Activated B cell treated with CpG ODN at 0.5 μM for 24 hours (primary cell): ENCODE measurements at regions of chr3 and their contacts with region 1.

Region 1: DNA sequence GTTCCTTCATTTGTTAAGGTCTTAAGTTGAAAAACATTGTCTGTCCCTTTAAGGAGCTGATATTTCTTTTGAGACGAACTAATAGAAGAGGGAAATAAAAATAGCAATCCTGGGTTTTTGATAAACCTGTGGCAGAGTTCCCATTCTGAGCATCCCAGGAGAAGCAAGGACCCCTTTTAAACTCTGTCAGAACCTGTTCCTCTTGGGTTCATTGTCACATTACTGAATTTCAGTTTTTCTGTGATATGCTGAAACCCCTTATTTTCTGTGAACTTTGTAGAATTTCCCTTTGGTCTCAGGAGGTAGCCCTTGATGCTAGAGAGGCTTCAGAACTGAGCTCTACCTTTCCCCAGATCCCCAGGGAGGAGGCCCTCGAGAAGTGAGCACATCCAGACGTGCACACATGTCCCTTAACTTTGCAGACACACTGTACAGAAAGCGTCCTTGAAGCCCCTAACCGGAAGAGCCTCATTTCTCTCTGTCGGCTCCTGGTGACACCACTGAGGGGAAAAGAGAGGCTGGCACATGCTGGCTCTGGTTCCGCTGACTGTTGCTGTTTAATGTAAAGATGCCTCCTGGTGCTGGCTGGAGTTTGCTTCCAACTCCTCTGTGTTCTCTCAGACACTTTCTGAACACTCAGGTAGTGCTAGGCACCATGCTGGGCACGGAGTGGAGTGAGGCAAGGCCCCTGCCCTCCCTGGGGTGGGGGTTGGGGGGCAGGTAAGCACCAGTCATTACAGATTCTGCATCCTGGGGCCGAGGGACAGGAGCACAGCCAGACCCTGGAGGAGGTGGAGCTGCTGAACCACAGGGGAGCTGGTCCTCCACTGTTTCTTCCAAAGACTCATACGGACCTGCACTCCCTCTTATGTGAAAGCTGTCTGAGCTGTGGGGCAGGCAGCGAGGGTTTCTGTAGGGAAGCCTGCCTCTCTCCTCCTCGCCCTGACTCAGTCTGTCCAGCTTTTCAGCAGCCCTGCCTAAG is 77.5 kb downstream of the CHDH start:
- DNase-seq: no peak
- ATAC-seq: peak; percentile 81
- H3K4me3 Mint-ChIP-seq: no peak overlapping the region
- H3K27ac Mint-ChIP-seq: peak overlapping the region; percentile 31
- H3K4me1 Mint-ChIP-seq: peaks cover 21% of the 10 kb centered on the region
- H3K27me3 Mint-ChIP-seq: no peaks in the 10 kb centered on the region
- CTCF ChIP-seq: no peak

Region 2: DNA sequence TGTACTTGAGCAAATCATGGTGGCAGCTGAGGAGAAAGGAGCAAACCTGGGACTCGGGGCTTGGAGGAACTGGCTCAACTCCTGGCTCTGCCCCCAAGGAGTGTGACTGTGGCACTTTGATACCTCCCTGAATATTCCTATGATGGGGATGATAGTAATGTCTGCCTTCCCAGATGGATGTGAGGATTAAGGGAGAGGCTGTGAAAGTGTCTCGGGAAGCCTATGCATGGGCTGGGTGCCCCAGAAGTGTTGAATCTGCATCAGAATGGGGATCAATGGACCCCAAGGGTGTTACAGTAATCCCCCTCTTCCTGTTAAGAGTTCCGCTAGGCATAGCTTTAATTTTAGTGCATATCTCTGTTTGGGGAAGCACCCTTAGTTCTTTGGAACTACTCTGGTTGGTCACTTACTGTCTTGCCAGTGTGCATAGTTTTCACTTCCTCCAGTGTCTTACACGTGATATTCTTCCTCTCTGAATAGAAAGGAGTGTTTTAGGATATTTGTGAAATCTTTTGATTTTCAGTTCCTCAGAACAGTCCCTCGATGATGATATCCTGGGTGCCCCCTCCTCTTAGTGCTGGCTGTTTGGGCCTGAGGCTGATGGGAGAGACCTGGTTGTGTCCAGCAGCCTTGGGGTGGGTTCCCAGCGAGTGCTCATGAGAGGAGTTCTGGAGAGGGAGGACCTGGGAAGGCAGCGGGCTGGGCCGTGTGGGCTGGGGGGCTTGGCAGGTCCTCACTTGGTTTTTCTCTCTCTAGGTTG is 20.1 kb before region 1 on chr3:
- CTCF ChIA-PET with region 1: no interaction called
- POLR2A ChIA-PET with region 1: interaction called, 5 read pairs
- intact Hi-C with region 1: loop called (anchors 2 kb)
- DNase-seq: peak; percentile 27
- ATAC-seq: peak; percentile 81
- H3K4me3 Mint-ChIP-seq: peak overlapping the region; percentile 72
- H3K27ac Mint-ChIP-seq: peak overlapping the region; percentile 94
- H3K4me1 Mint-ChIP-seq: peaks cover 68% of the 10 kb centered on the region
- H3K27me3 Mint-ChIP-seq: no peaks in the 10 kb centered on the region
- CTCF ChIP-seq: no peak

Region 3: DNA sequence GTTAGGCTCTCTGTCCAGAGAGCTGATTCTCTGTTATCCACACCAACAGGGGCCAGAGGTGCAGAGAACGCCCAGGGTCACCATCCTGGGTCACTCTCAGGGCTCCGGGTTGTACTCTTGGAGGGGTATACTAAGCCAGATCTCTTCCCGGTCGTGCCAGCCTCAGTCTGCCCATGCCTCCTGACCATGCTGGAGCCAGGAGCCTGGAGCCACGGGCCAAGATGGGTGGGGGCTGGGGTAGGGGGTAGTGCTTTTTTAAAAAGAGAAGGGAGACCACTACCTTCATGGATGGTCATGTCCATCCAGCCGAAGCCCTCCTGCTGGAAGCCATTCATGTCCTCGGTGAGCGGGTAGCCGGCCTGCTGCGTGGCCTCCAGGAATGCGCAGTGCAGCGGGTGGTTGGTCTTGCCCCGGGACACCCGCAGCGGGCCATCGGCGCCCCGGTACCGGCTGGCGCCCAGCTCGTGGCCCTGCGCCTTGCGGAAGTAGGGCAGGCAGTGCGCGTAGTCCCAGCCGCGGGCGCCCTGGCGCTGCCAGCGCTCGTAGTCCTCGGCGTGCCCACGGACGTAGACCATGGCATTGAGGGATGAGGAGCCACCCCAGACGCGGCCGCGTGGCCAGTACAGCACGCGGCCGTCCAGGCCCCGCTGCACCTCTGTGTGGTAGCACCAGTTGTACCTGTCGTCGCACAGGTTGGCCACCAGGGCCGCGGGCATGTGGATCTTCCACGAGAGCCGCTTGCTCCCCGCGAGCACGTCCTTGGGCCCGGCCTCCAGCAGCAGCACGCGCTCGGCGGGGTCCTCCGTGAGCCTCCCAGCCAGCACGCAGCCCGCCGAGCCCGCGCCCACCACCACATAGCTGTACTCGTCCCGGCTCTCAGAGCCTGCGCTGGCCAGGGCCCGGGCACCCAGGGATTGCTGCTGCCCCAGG is 54.5 kb after region 1 on chr3:
- CTCF ChIA-PET with region 1: no interaction called
- POLR2A ChIA-PET with region 1: no interaction called
- intact Hi-C with region 1: no loop called
- DNase-seq: no peak
- ATAC-seq: no peak
- H3K4me3 Mint-ChIP-seq: no peak overlapping the region
- H3K27ac Mint-ChIP-seq: no peak overlapping the region
- H3K4me1 Mint-ChIP-seq: no peaks in the 10 kb centered on the region
- H3K27me3 Mint-ChIP-seq: no peaks in the 10 kb centered on the region
- CTCF ChIP-seq: no peak